ENCODE measurements at regions of chr15 and their contacts with region 1.

Region 1: GRCh38 chr15:68795298-68795848 is 25.3 kb downstream of the ANP32A start:
- DNase-seq: peak; percentile 87
- ATAC-seq: peak; percentile 79
- H3K4me3 Mint-ChIP-seq: no peak overlapping the region
- H3K27ac Mint-ChIP-seq: peak overlapping the region; percentile 40
- H3K4me1 Mint-ChIP-seq: peaks cover 99% of the 10 kb centered on the region
- H3K27me3 Mint-ChIP-seq: no peaks in the 10 kb centered on the region

Region 2: GRCh38 chr15:68755731-68756130 is 39.6 kb before region 1 on chr15:
- CTCF ChIA-PET with region 1: no interaction called
- POLR2A ChIA-PET with region 1: no interaction called
- intact Hi-C with region 1: loop called in 1 of 2 experiments (anchors 1 kb)
- DNase-seq: no peak
- ATAC-seq: no peak
- H3K4me3 Mint-ChIP-seq: no peak overlapping the region
- H3K27ac Mint-ChIP-seq: no peak overlapping the region
- H3K4me1 Mint-ChIP-seq: peaks cover 5% of the 10 kb centered on the region
- H3K27me3 Mint-ChIP-seq: peaks cover 7% of the 10 kb centered on the region

Region 3: DNA sequence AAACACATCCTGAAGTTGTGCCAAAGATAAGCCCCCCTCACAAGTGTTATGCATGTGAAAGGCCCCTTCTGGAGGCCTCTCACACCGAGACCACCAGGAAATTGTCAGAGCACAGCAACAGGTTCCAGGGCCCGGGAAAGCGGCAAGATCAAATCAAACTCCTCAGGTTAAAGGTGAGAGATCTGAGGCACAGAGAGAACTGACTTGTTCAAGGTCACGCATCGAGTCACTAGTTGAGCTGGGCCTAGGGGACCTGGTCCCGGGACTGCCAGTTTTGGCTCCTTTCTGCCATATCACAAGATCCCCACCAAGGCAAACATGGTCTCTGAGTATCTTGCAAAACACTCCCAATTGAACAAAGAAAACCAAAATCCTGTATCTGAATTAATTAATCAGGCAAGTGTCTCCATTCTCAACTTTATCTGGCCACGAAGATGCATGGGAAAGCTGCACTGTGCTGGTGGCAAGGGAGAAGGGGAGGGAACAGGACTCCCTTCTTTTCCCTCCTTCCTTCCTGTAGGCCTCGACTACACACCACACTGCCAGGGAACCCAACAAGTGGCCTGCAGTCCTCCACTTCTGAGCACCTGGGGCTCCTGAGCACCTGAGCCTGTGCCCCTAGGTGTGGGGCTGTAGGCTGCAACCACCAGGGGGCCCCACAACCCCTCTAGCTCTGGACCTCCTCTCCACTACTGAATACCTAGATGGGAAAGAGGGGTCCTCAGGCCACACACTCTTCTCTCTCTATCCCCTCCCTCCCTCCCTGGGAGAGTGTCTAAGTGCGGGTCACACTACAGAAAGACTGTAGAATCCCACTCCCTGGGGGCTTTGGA is 11.9 kb before region 1 on chr15:
- CTCF ChIA-PET with region 1: interaction called, 24 read pairs
- POLR2A ChIA-PET with region 1: interaction called, 3 read pairs
- intact Hi-C with region 1: no loop called
- DNase-seq: peak; percentile 78
- ATAC-seq: peak; percentile 52
- H3K4me3 Mint-ChIP-seq: peak overlapping the region; percentile 27
- H3K27ac Mint-ChIP-seq: peak overlapping the region; percentile 86
- H3K4me1 Mint-ChIP-seq: peaks cover 33% of the 10 kb centered on the region
- H3K27me3 Mint-ChIP-seq: no peaks in the 10 kb centered on the region

Measured in activated CD4-positive, alpha-beta T cell treated with anti-CD3 and anti-CD28 coated beads for 36 hours (primary cell).